Activated B cell treated with CpG ODN at 0.5 μM for 24 hours (primary cell): ENCODE measurements at regions of chr22 and their contacts with region 1.

Region 1: GRCh38 chr22:35299673-35300497 is at the start of gene TOM1:
- DNase-seq: peak; percentile 98
- ATAC-seq: peak; percentile 93
- H3K4me3 Mint-ChIP-seq: peak within 1 kb of the TSS; percentile 92
- H3K27ac Mint-ChIP-seq: peak within 1 kb of the TSS; percentile 91
- H3K4me1 Mint-ChIP-seq: peaks cover 20% of the 10 kb centered on the region
- H3K27me3 Mint-ChIP-seq: no peaks in the 10 kb centered on the region
- CTCF ChIP-seq: no peak
- total RNA-seq, gene TOM1: 32.2 and 40.8 TPM in 2 replicates

Region 2: DNA sequence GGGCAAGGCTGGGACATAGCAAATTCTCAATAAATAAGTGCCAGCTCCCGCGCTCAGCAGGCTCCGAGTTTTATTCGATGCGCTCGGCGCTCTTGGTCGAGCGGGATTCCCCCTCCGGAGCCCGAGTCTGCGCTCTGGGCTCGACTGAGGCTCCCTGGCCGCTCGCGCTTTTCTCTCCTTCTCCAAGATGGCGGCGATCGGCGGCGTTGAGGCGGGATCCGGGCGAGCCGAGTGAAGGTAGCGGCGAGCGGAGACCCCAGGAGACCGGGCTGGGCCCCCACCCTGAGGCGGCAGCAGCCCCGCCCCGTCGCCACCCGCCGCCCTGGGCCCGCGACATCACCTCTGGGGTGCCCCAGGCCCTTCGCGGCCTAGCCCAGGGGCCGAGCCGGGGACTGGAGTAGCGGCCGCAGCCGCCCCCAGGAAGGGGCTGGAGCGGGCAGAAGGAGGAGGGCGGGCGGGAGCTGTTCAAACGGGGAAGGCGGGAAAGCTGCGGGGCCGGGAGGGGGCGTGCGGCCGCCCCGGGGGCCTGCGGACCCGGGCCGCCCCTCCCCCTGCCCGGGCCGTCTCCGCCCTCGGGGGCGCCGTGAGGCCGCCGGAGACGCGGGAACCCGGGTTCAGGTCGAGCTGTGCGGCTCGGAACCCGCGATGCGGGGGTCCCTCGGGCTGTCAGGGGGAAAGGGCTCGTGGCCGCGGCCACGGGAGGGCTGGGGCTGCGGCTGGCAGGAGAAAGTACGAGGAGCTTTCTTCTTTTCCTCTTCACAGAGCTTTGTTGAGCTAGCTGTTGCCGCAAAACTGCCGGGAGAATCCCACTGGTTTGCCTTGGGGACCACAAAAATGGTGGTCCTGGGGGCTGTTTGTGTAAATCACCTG is 42.3 kb before region 1 on chr22 and contains the start of gene HMGXB4:
- CTCF ChIA-PET with region 1: interaction called, 5 read pairs
- POLR2A ChIA-PET with region 1: interaction called, 34 read pairs
- intact Hi-C with region 1: loop called (anchors 1 kb)
- DNase-seq: peak; percentile 85
- ATAC-seq: peak; percentile 91
- H3K4me3 Mint-ChIP-seq: peak within 1 kb of the TSS; percentile 89
- H3K27ac Mint-ChIP-seq: peak within 1 kb of the TSS; percentile 84
- H3K4me1 Mint-ChIP-seq: peaks cover 20% of the 10 kb centered on the region
- H3K27me3 Mint-ChIP-seq: no peaks in the 10 kb centered on the region
- CTCF ChIP-seq: no peak
- total RNA-seq, gene HMGXB4: 22.5 and 24.8 TPM in 2 replicates

Region 3: DNA sequence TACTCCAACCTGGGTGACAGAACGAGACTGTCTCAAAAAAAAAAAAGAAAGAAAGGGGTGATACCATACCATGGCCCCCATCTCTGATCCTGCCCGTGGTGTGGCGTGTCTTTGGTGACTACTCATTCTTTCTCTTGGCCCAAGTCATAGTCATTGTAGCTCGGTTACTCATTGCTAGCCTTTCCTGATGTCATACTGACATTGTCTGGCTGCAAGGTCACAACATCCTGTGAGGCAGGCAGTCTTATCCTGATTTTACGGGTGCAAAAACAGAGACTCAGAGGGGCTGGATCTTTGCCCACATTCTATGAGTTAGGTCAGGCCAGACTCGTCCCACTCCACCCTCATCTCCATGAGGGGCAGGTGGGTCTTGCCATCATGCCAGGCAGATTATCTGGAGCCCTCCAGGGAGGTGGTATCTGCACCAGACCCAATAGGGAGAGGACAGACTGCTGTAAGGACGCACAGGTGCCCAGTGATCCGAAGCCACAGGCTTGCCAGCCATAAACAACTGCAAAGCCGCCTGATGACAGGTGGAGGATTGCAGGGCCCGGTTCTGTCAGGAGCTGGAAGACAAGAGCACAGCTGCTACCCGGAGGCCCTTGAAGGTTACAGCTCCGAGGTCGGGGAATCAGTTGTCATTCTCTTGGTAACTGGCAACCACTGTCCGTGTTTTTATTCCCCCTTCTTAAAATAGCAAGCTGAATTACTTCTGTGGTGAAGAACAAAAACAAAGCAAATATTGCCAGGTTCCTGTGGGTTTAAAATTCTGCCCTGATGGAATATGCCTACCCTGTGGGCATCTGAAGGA is 13.6 kb after region 1 on chr22:
- CTCF ChIA-PET with region 1: no interaction called
- POLR2A ChIA-PET with region 1: interaction called, 22 read pairs
- intact Hi-C with region 1: loop called (anchors 1 kb)
- DNase-seq: peak; percentile 6
- ATAC-seq: no peak
- H3K4me3 Mint-ChIP-seq: no peak overlapping the region
- H3K27ac Mint-ChIP-seq: no peak overlapping the region
- H3K4me1 Mint-ChIP-seq: peaks cover 38% of the 10 kb centered on the region
- H3K27me3 Mint-ChIP-seq: no peaks in the 10 kb centered on the region
- CTCF ChIP-seq: no peak

Region 4: GRCh38 chr22:35601743-35602630 is 302.1 kb after region 1 on chr22:
- CTCF ChIA-PET with region 1: no interaction called
- POLR2A ChIA-PET with region 1: no interaction called
- intact Hi-C with region 1: no loop called
- DNase-seq: no peak
- ATAC-seq: no peak
- H3K4me3 Mint-ChIP-seq: no peak overlapping the region
- H3K27ac Mint-ChIP-seq: no peak overlapping the region
- H3K4me1 Mint-ChIP-seq: no peaks in the 10 kb centered on the region
- H3K27me3 Mint-ChIP-seq: peaks cover 16% of the 10 kb centered on the region
- CTCF ChIP-seq: no peak